Gastrocnemius medialis (tissue), 4 donors: ENCODE measurements at regions of chr9 and their contacts with region 1.

Region 1: DNA sequence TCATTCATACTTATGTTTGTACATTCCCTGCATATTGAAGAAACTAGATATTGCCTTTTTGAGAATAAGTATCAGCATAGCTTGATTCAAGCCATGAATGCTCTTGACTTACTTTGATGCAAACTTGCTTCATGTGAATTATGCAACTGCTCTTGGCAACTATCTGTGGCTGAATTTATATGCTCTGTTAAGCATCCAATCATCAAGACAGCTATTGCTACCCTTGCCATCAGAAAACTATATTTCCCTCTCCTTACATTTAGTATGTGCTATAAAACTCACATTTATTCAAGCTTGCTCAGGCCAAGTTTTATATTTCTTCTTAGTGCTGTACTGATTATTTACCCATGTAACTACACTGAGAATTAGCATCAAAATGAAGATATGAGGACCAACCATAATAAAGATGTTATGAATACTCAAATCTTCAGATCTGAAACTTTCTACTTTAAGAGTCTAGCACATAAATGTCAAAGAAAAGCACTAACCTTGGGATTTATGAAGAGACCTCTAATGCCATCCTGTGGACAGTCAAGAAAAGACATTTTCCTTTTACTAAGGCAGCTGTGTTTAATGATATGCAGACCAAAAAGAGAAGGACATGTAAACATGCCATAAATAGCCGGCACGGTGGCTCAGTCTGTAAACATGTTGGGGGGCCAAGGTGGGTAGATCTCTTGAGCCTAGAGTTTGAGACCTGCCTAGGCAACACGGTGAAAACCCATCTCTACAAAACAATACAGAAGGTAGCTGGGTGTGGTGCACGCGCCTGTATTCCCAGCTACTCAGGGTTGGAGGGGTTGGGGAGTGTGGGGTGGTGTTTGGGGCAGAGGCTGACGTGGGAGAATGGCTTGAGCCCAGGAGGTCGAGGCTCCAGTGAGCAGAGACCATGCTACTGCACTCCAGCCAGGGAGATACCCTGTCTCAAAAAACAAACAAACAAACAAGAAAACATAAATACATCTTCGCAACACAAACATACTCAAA is 267.0 kb upstream of the TYRP1 start:
- DNase-seq: no peak
- ATAC-seq: no peak
- H3K4me3 ChIP-seq: no peak overlapping the region
- H3K27ac ChIP-seq: no peak overlapping the region
- H3K4me1 ChIP-seq: no peaks in the 10 kb centered on the region
- H3K27me3 ChIP-seq: no peaks in the 10 kb centered on the region
- CTCF ChIP-seq: no peak
- POLR2A ChIP-seq: no peak

Region 2: GRCh38 chr9:12538842-12539579 is 112.8 kb after region 1 on chr9:
- in situ Hi-C with region 1: loop called in 1 of 4 experiments (anchors 25 kb)
- intact Hi-C with region 1: no loop called
- DNase-seq: no peak
- ATAC-seq: no peak
- H3K4me3 ChIP-seq: no peak overlapping the region
- H3K27ac ChIP-seq: no peak overlapping the region
- H3K4me1 ChIP-seq: no peaks in the 10 kb centered on the region
- H3K27me3 ChIP-seq: no peaks in the 10 kb centered on the region
- CTCF ChIP-seq: no peak
- POLR2A ChIP-seq: no peak